ENCODE measurements at regions of chr12 and their contacts with region 1.

Region 1: GRCh38 chr12:123591702-123592481 is 7.5 kb downstream of the TMED2 start:
- DNase-seq: no peak
- H3K4me3 ChIP-seq: no peak overlapping the region
- H3K27me3 ChIP-seq: no peaks in the 10 kb centered on the region
- CTCF ChIP-seq: no peak

Region 2: DNA sequence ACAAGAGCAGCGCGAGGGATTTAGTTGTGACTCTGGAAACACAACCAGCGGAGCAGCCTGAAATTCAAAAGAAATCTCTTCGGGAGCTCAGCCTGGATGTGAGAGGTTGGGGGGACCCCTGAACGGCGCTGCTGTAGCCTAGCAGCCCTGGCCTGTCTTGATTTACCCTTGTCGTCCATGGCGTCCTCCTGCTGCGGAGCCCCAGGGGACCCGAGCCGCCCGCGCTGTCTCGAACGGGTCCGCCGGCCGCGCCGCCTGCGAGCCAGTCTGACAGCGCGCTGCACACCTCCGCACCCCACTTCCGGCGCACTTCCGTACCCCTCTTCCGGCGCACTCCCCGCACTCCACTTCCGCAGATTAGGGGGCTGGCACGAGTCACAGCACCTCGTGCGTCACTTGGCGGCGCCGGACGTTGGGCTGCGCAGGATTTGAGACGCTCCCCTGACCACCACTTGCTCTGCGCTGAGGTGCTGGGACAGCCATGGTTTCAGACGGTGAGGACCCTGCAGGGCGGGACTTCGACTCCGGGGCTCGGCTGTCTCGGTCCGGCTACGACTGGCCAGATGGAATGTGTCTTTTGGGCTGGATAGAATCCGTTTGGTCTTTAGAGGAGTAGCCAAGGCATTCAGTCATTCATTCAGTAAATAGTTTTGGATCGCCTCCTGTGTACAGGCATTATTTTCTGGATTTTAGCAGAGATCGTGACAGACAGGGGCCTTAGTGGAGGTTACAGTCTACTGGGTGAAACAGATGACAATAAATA is 41.7 kb after region 1 on chr12 and contains the starts of genes EIF2B1 and GTF2H3:
- CTCF ChIA-PET with region 1: no interaction called
- POLR2A ChIA-PET with region 1: interaction called, 10 read pairs
- DNase-seq: peak; percentile 76
- H3K4me3 ChIP-seq: peak within 1 kb of the TSS; percentile 55
- H3K27me3 ChIP-seq: no peaks in the 10 kb centered on the region
- CTCF ChIP-seq: no peak
- polyA plus RNA-seq, gene EIF2B1: 27.4 and 29.9 TPM in 2 replicates
- polyA plus RNA-seq, gene GTF2H3: 19.6 and 40.5 TPM in 2 replicates

Region 3: GRCh38 chr12:124727264-124727721 is 1135.4 kb after region 1 on chr12:
- CTCF ChIA-PET with region 1: no interaction called
- POLR2A ChIA-PET with region 1: no interaction called
- DNase-seq: peak; percentile 50
- H3K4me3 ChIP-seq: no peak overlapping the region
- H3K27me3 ChIP-seq: no peaks in the 10 kb centered on the region
- CTCF ChIP-seq: no peak